Left lung (tissue), 14 donors: ENCODE measurements at regions of chr2 and their contacts with region 1.

Region 1: DNA sequence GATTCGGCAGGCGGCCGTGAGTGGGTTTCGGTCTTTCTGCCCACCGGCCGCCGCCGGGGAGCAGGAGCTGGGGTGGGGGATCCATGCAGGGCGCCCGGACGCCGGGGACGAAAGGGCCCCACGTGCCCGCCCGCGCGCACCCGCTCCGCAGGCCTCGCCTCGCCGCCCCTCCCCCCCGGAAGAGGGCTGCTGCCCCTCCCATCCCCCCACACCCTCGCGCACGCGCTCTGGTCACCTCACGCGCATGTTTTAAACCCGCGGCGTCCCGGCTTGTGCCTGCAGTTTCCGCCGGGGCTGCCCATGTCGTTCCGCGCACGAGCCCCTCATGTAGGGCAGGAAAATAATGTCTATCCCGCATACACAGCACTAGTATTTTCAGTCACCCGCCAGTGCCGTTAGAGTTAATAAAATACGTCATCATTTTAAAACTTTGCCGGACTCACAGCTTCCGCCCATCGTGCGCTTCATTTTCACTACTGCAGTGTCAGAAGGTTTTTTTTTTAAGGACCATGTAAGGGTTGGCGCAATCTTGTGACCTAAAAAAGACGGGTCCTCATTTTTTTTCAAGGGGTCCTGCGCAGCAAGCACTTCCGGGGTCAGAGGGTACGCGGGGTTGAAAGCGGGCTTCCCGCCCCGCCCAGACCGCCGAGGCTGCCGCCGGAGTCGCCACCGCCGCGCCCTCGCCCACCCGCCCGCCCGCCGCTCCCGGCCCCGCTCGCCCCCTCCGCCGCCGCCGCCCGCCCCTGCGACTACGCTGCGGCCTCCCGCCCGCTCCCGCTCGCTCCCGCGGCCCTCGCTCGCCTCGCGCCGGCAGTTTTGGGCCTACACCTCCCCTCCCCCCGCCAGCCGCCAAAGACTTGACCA is at the start of gene PCBP1:
- DNase-seq: peak; percentile 95 to 97 (median 96)
- ATAC-seq: peak; percentile 81
- H3K4me3 ChIP-seq: peak within 1 kb of the TSS; percentile 67 to 93
- H3K27ac ChIP-seq: peak within 1 kb of the TSS; percentile 100
- H3K4me1 ChIP-seq: peaks cover 15 to 64% of the 10 kb centered on the region in 2 donors
- H3K27me3 ChIP-seq: no peaks in the 10 kb centered on the region
- CTCF ChIP-seq: no peak
- polyA plus RNA-seq, gene PCBP1: 172 to 271 (median 218) TPM

Region 2: DNA sequence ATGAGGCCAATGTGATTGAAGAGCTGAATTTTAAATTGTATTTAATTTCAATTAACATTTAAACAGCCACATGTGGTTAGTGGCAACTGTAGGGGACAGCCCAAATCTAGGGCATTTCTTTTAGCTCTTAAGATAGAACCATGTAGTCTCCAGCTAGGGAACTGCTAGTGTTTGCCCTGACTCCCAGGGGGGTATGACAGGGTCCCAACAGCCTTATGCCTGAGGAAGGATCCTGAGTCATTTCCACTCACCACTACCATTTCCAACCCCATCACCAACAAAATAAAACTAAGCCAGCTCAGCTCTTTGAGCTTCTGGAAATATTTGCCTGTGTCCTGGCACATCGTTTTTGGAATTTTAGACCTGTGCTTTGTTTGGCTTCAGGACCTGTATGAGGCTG is 271.4 kb before region 1 on chr2:
- intact Hi-C with region 1: no loop called
- DNase-seq: no peak
- ATAC-seq: no peak
- H3K4me3 ChIP-seq: no peak overlapping the region
- H3K27ac ChIP-seq: no peak overlapping the region
- H3K4me1 ChIP-seq: peaks cover 0 to 12% of the 10 kb centered on the region in 2 donors
- H3K27me3 ChIP-seq: no peaks in the 10 kb centered on the region
- CTCF ChIP-seq: no peak

Region 3: DNA sequence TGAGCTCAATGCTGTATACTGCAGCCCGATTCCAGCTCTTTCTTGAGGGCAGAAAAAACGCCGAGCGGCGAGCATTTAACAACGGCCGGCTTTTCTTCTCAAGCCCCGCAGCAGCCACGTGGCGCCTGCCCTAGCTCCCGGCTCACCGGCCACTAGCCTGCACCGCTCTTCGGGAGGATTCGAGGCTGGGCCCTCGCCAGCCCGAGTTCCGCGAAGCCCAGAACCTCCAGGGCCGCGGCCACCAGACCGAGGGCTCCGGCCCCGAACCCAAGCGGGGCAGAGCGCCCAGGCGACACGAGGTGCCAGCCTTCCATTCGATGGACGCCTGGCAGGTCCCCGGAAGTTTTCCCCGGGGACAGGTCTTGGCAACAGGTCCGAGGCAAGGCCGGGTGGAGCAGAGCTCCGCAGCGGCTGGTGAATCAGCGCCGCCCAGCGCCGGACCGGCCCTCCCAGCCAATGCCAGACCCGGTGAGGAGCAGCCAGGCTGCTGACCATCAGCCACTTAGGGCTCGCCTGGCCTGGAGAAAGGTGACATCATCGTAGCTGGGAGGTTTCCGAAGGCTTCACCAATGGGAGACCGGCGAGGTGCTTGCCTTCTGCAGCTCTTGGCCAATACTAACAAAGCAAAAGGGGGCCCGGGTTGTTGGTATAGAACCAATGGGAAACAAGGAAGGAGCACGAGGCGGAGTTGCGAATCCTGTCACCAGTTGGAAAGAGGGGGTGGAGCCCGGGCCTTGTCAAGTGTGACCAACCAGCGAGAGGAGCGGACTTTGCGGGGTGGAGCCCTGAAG is 172.7 kb before region 1 on chr2:
- intact Hi-C with region 1: loop called in 1 of 2 experiments (anchors 10 kb)
- DNase-seq: peak; percentile 99 to 100 (median 100)
- ATAC-seq: peak; percentile 91
- H3K4me3 ChIP-seq: peak overlapping the region; percentile 56 to 90
- H3K27ac ChIP-seq: peak overlapping the region; percentile 98 to 99
- H3K4me1 ChIP-seq: peaks cover 12 to 58% of the 10 kb centered on the region in 2 donors
- H3K27me3 ChIP-seq: no peaks in the 10 kb centered on the region
- CTCF ChIP-seq: peak in 1 of 2 donors; percentile 23

Region 4: GRCh38 chr2:70124983-70125480 is 38.0 kb after region 1 on chr2:
- intact Hi-C with region 1: loop called in 1 of 2 experiments (anchors 5 kb)
- DNase-seq: peak; percentile 74 to 92 (median 78)
- ATAC-seq: peak; percentile 64
- H3K4me3 ChIP-seq: peak overlapping the region; percentile 46 to 52
- H3K27ac ChIP-seq: peak overlapping the region; percentile 99 to 100
- H3K4me1 ChIP-seq: peaks cover 4 to 60% of the 10 kb centered on the region in 2 donors
- H3K27me3 ChIP-seq: no peaks in the 10 kb centered on the region
- CTCF ChIP-seq: no peak

Region 5: DNA sequence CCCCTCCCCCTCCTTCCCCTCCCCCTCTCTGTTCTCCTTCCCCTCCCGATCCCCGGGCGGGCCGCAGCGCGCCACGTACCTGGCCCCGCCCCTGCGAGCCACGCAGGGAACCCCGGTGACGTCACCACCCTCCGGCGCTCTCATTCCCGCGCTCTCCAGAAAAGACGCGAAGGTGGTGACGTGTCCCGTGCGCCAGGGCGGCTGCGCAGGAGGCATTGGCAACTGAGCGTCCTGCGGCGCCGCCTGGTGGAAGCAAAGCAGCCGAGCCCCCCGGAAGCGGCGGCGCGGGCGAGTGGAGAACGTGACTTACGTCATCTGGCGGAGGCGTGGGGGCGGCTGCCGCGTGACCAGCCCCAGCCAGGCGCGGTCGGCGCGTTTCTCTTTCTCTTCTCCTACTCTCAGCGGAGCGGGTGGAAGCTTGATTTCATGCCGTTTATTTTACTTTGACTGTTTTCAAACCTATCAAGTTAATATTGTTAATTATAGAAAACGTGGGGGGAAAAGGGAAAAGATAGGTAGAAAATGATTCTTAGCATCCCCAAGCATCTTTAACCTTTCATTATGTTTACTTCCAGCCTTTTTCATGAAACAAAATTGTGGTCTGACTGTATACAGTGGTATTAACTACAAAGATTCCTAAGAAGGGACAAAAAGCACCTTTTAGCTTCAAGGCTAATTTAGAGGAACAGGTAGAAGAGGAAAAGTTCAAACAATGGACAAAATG is 55.7 kb after region 1 on chr2:
- intact Hi-C with region 1: loop called in 1 of 2 experiments (anchors 5 kb)
- DNase-seq: peak; percentile 99 to 100 (median 100)
- ATAC-seq: peak; percentile 81
- H3K4me3 ChIP-seq: peak overlapping the region; percentile 24 to 50
- H3K27ac ChIP-seq: peak overlapping the region; percentile 99 to 100
- H3K4me1 ChIP-seq: peaks cover 10 to 35% of the 10 kb centered on the region in 2 donors
- H3K27me3 ChIP-seq: no peaks in the 10 kb centered on the region
- CTCF ChIP-seq: peak; percentile 81 to 98

Region 6: GRCh38 chr2:70226781-70227180 is 139.7 kb after region 1 on chr2:
- intact Hi-C with region 1: no loop called
- DNase-seq: no peak
- ATAC-seq: no peak
- H3K4me3 ChIP-seq: no peak overlapping the region
- H3K27ac ChIP-seq: no peak overlapping the region
- H3K4me1 ChIP-seq: no peaks in the 10 kb centered on the region
- H3K27me3 ChIP-seq: no peaks in the 10 kb centered on the region
- CTCF ChIP-seq: no peak

Region 7: DNA sequence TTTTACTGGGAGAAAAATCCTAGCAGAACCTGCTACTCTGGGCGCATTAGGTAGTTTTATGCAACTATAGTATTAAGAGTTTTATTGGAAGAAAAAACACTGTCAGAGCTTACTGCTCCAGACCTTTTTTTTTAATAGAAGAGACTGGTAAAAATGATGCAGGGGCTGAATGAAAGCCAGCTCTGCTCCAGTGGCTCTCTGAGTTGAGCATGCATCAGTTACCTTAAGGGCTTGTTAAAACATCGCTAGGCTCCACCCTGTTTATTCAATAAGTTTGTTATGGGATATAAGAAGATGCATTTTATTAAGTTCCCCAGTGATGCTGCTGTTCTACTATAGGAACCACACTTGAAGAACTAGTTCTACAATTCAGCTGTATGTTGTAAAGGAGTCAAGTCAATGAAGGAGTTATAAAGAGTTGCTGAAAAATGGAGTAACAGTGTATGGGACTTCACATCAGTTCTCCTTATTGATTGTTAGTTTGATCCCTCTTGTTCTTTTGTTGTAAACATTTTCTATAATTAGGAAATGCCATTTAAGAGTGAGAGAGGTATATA is 193.2 kb after region 1 on chr2:
- intact Hi-C with region 1: no loop called
- DNase-seq: no peak
- ATAC-seq: no peak
- H3K4me3 ChIP-seq: no peak overlapping the region
- H3K27ac ChIP-seq: no peak overlapping the region
- H3K4me1 ChIP-seq: peaks cover 0 to 13% of the 10 kb centered on the region in 2 donors
- H3K27me3 ChIP-seq: no peaks in the 10 kb centered on the region
- CTCF ChIP-seq: no peak